ENCODE measurements at regions of chr5 and their contacts with region 1.

Region 1: GRCh38 chr5:154467655-154468354 is 10.2 kb downstream of the HAND1 start:
- DNase-seq: peak; percentile 88

Region 2: DNA sequence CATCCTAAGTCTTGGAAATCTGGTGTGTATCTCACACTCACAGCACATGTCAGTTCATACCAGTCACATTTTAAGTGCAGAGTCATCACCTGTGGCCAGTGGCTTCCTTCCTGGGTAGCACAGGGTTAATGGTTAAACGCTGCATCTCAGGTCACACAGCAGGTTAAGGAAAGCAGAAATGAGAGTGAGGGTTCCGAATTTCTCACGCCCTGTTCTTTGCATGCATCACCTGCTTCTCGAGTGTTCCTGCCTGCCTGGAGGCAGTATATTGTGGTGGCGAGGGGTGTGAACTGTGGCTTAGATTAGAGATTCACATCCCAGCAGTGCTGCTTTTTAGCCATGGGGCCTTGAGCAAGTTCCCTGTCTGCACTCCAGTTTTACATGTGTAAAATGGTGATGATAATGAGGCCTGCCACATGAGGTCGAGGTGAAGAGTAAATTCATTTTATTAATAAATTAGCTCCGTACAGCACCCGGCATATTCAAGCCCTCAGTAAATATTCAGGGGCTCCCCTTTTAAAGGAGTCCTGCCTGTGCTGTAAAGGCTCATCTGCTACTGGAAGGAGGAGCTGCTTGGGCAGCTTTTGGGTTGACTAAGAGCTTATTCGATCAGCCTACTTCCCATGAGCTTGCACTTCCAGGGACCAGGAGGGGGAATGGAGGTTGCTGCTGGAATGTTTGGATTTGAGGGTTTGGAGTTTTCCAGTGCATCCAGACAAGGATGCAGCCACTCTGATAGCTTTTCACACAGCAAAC is 83.1 kb before region 1 on chr5:
- CTCF ChIA-PET with region 1: no interaction called
- POLR2A ChIA-PET with region 1: no interaction called
- DNase-seq: no peak

Region 3: GRCh38 chr5:154610321-154611154 is 142.7 kb after region 1 on chr5:
- CTCF ChIA-PET with region 1: interaction called, 43 read pairs
- POLR2A ChIA-PET with region 1: interaction called, 3 read pairs
- DNase-seq: peak; percentile 89